Breast epithelium (tissue), 4 donors: ENCODE measurements at regions of chr7 and their contacts with region 1.

Region 1: GRCh38 chr7:141860207-141860606 is 18.9 kb upstream of the PRSS37 start:
- DNase-seq: no peak
- H3K4me3 ChIP-seq: no peak overlapping the region
- H3K27ac ChIP-seq: no peak overlapping the region
- H3K4me1 ChIP-seq: no peaks in the 10 kb centered on the region
- H3K27me3 ChIP-seq: no peaks in the 10 kb centered on the region
- CTCF ChIP-seq: no peak
- POLR2A ChIP-seq: no peak

Region 2: DNA sequence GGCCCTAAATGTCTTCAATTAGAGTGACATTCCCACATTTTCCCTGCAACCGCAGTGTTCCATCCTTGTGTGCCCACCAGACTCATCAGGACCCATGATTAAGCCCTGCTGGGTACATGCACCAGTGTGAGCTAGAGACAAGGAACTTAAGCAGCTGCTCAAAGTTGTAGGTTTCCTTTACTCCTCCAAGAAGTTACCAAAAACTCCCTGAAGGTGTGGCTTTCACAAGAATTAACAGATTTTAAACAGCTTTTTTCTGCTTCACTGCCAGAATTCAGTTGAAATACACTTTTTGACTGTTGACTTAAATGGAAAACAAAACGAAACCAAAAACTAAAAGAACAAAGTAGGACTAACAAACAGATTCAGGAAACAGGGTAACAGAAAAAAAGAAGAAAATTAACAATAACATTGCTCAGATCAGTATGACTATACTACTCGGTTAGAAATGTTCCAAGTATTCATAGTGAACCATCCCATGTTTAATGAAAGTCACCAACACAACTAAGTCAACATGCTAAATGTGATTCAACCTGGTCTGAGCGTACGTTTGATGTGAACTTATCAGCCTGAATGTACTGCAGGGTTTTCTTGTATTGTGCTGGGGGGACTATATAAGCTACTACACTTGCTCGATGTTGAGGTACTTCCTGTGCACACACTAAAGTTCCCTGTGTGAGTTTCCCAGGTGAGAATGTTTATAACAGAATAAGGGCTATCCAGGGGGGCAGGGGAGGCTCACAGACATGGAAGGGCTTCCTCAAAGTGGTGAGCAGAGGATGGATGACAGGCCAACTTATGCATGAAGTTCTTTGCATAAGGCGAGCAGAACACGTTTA is 1484.1 kb before region 1 on chr7:
- intact Hi-C with region 1: no loop called
- DNase-seq: no peak
- H3K4me3 ChIP-seq: no peak overlapping the region
- H3K27ac ChIP-seq: no peak overlapping the region
- H3K4me1 ChIP-seq: no peaks in the 10 kb centered on the region
- H3K27me3 ChIP-seq: no peaks in the 10 kb centered on the region
- CTCF ChIP-seq: no peak
- POLR2A ChIP-seq: no peak

Region 3: DNA sequence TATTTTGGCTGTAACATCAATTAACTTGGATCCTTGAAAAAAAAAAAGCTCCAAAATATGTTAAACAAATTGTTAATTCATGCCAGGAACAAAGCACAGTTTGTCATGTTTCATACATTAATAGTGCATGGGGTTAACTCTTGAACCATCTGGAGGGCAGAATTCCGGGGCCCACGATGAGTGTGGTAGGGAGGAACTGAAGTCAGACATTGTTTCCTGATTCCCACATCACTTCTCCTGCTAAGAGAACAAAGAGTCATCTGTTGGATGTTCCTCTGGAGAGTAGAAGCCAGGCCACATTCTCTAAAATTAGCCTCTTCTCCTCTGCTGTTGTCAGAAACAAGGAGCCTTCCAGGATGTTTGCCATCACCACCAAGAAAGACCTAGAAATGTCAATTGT is 731.7 kb before region 1 on chr7:
- intact Hi-C with region 1: loop called (anchors 5 kb)
- DNase-seq: no peak
- H3K4me3 ChIP-seq: no peak overlapping the region
- H3K27ac ChIP-seq: peak overlapping the region in 1 of 2 donors; percentile 55
- H3K4me1 ChIP-seq: no peaks in the 10 kb centered on the region
- H3K27me3 ChIP-seq: no peaks in the 10 kb centered on the region
- CTCF ChIP-seq: no peak
- POLR2A ChIP-seq: no peak

Region 4: DNA sequence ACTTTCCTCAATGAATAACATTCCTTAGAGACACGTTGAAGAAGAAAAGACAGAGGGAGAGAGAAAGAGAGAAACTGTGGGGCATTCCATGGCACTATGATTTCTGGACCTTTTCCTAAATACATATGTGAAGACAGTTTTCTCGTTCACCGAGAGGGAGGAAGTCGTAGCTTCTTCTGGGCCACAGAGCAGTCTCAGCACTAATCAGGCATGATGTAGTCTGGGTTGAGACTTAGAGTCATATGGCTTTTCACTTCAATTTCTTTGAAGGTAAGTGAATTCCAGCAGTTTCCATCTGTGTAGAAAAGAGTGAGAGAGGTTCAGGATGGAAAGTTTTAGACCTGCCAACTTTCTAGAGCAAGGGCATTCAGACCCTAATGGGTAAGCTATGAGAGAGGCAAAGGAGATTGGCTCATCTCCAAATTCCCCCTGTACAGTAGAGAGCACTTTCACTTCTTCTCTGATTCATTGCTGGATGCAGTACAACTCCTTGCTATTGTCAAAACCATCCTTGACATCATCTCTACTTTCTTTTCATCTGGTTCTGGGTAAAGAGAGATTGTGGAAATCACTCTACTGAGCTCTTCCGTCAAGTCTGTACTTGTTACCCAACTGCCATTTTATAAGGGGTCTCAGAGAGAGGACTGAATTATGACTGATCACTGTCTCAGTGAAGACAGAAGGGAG is 24.5 kb after region 1 on chr7:
- intact Hi-C with region 1: no loop called
- DNase-seq: no peak
- H3K4me3 ChIP-seq: no peak overlapping the region
- H3K27ac ChIP-seq: no peak overlapping the region
- H3K4me1 ChIP-seq: no peaks in the 10 kb centered on the region
- H3K27me3 ChIP-seq: no peaks in the 10 kb centered on the region
- CTCF ChIP-seq: no peak
- POLR2A ChIP-seq: no peak